ENCODE measurements at regions of chr2 and their contacts with region 1.

Region 1: GRCh38 chr2:178414266-178415247 is 36.4 kb downstream of the PRKRA start:
- DNase-seq: peak; percentile 88
- ATAC-seq: peak; percentile 88
- H3K4me3 Mint-ChIP-seq: peak overlapping the region; percentile 77
- H3K27ac Mint-ChIP-seq: peak overlapping the region; percentile 92
- H3K4me1 Mint-ChIP-seq: peaks cover 13% of the 10 kb centered on the region
- H3K27me3 Mint-ChIP-seq: peaks cover 9% of the 10 kb centered on the region; the same call in 1 of the 2 replicates
- CTCF ChIP-seq: peak; percentile 84

Region 2: DNA sequence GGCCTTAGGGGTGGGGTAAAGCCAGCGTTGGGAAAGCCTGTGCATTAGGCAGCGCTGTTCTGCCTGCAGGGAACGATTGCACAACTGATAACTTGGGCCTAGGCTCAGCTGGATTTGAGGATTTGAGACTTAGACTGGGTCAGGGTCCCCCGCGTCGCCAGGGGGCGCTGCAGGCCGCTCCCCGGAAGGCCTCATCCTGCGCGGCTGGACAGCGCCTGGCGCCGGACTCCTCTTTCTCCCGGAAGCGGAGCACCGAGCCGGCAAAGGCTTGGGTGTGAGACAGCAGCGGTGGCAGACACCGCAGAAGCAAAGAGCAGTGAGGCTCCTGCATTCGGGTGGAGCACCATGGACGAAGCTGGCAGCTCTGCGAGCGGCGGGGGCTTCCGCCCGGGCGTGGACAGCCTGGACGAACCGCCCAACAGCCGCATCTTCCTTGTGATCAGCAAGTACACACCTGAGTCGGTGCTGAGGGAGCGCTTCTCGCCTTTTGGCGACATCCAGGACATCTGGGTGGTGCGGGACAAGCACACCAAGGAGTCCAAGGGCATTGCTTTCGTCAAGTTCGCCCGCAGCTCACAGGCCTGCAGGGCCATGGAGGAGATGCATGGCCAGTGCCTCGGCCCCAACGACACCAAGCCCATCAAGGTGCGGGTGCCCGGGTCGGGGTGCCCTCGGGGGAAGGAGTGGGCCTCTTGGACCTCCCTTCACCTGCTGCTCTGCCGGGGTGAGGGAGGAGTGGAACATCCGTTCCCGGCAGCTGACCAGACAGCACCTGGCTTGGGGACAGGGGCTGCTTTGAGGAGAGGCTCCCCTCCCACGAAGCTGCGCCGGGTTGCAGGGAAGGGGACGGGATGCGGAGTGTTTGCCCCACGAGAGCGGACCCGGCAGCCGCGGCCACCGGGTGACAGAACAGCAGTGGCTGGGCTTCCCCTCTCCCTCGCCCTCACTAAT is 302.1 kb before region 1 on chr2 and contains the start of gene RBM45:
- CTCF ChIA-PET with region 1: interaction called, 55 read pairs
- POLR2A ChIA-PET with region 1: interaction called, 6 read pairs
- DNase-seq: peak; percentile 91
- ATAC-seq: peak; percentile 96
- H3K4me3 Mint-ChIP-seq: peak within 1 kb of the TSS; percentile 92
- H3K27ac Mint-ChIP-seq: no peak within 1 kb of the TSS
- H3K4me1 Mint-ChIP-seq: peaks cover 8% of the 10 kb centered on the region; the same call in 1 of the 2 replicates
- H3K27me3 Mint-ChIP-seq: no peaks in the 10 kb centered on the region
- CTCF ChIP-seq: peak; percentile 94
- total RNA-seq, gene RBM45: 9.2 to 12.3 TPM (median 10.5 TPM) in 3 replicates

Region 3: GRCh38 chr2:178128836-178129630 is 285.5 kb before region 1 on chr2:
- CTCF ChIA-PET with region 1: interaction called, 11 read pairs
- POLR2A ChIA-PET with region 1: no interaction called
- DNase-seq: no peak
- ATAC-seq: no peak
- H3K4me3 Mint-ChIP-seq: no peak overlapping the region
- H3K27ac Mint-ChIP-seq: no peak overlapping the region; the same call in 1 of the 2 replicates
- H3K4me1 Mint-ChIP-seq: peaks cover 17% of the 10 kb centered on the region
- H3K27me3 Mint-ChIP-seq: no peaks in the 10 kb centered on the region
- CTCF ChIP-seq: no peak

Region 4: DNA sequence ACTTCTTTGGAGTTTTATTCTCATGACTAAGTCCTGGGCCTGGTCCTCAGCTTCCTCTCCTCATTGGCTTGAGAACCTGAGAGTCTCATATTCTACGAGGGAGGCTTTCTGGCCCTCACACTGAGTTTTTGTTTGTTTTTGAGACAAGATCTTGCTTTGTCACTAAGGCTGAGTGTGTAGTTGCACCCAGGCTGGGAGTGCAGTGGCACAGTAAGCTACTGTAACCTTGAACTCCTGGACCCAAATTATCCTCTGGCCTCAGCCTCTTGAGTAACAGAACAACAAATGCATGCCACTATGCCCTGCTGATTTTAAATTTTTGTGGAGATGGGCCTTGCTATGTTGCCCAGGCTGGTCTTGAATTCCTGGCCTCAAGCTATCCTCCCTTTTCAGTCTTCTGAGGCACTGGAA is 13.8 kb after region 1 on chr2:
- CTCF ChIA-PET with region 1: interaction called, 18 read pairs
- POLR2A ChIA-PET with region 1: no interaction called
- DNase-seq: no peak
- ATAC-seq: no peak
- H3K4me3 Mint-ChIP-seq: no peak overlapping the region
- H3K27ac Mint-ChIP-seq: no peak overlapping the region
- H3K4me1 Mint-ChIP-seq: no peaks in the 10 kb centered on the region
- H3K27me3 Mint-ChIP-seq: peaks cover 6% of the 10 kb centered on the region
- CTCF ChIP-seq: no peak

Region 5: DNA sequence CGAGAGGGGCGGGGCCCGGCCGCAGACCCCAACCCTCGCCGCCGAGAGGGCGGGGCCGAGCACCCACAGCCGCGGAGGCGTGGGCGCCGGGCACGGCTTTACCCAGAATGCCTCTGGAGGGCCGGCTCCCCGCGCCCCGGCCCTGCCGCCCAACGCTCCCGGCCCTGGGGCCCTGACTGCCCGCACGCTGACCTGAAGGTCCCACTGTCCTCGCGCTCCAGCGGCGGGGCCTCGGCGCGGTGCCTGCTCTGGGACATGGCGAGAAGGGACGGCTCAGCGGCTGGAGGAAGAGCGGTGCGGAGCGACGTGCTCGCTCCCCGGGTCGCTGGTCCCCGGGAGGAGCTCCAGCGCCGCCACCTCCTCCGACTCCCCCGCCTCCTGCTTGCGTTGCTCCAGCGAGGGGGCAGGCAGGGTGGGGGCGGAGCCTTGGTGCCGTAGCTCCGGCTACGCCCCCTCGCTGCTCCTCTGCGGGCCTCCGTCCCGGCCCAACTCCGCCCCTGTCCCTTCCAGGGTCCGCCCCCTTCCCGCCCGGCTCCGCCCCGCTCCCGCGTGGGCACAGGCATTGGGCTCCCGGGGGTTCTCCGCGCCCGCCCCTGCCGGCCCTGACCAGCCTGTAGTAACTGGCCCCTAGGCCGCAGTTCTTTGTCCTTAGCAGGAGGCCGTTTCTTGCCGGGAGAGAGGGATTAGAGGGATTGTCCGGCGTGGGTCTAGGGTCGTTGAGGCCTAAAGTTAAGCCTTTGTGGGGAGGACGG is 36.4 kb after region 1 on chr2 and contains the starts of genes PJVK and PRKRA:
- CTCF ChIA-PET with region 1: interaction called, 11 read pairs
- POLR2A ChIA-PET with region 1: interaction called, 20 read pairs
- DNase-seq: peak; percentile 96
- ATAC-seq: peak; percentile 93
- H3K4me3 Mint-ChIP-seq: peak within 1 kb of the TSS; percentile 85
- H3K27ac Mint-ChIP-seq: peak within 1 kb of the TSS; percentile 100
- H3K4me1 Mint-ChIP-seq: peaks cover 20% of the 10 kb centered on the region
- H3K27me3 Mint-ChIP-seq: no peaks in the 10 kb centered on the region
- CTCF ChIP-seq: no peak
- total RNA-seq, gene PJVK: 2.5 to 6.8 TPM (median 4.4 TPM) in 3 replicates
- total RNA-seq, gene PRKRA: 55.4 to 57.6 TPM (median 55.4 TPM) in 3 replicates